Posterior cingulate gyrus (tissue), 11 donors: ENCODE measurements at regions of chr9 and their contacts with region 1.

Region 1: GRCh38 chr9:14275331-14275730 is 38.6 kb downstream of the NFIB start:
- DNase-seq: no peak

Region 2: GRCh38 chr9:14303521-14303920 is 28.2 kb after region 1 on chr9:
- intact Hi-C with region 1: loop called (anchors 1 kb)
- DNase-seq: peak; percentile 69 to 96 (median 80)